SK-N-SH (cell line): ENCODE measurements at regions of chr9 and their contacts with region 1.

Region 1: GRCh38 chr9:34701769-34702736 is 7.9 kb downstream of the CCL21 start:
- DNase-seq: peak; percentile 90
- H3K4me3 ChIP-seq: peak overlapping the region; percentile 54 to 58
- H3K27ac ChIP-seq: peak overlapping the region in 1 of 2 experiments; percentile 18; a peak in 2 of 4 replicates
- H3K4me1 ChIP-seq: peaks cover 0 to 4% of the 10 kb centered on the region in 2 experiments; a peak in 1 of 4 replicates
- H3K27me3 ChIP-seq: no peaks in the 10 kb centered on the region
- CTCF ChIP-seq: peak; percentile 98
- EP300 ChIP-seq: 0 out of 4 replicates have a peak, but pooled peaks of 1 of the 2 experiments have one; percentile 24
- RAD21 ChIP-seq: peak; percentile 90

Region 2: DNA sequence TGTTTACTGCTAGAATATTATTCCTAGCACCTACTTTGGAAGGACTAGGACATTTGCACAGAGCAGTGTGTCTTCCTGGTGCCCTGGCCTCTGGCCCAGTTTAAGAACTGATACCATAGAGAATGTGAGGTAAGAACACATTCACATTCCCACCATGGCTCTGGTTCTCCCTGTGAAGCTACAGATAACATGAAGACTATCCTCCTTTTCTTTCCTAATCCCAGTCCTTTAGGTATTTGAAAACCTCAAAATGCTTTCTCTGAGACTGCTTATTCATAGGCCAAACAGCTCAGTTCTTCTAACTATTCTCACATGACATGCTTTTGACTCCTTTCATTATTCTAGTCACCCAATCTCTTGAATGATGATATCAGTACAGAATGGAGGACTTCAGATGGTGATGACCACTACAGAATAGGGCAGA is 255.6 kb before region 1 on chr9:
- CTCF ChIA-PET with region 1: no interaction called
- POLR2A ChIA-PET with region 1: no interaction called
- DNase-seq: no peak
- H3K4me3 ChIP-seq: no peak overlapping the region
- H3K27ac ChIP-seq: no peak overlapping the region
- H3K4me1 ChIP-seq: peaks cover 9 to 15% of the 10 kb centered on the region in 2 experiments; a peak in 2 of 4 replicates
- H3K27me3 ChIP-seq: no peaks in the 10 kb centered on the region
- CTCF ChIP-seq: no peak
- EP300 ChIP-seq: no peak
- RAD21 ChIP-seq: no peak

Region 3: DNA sequence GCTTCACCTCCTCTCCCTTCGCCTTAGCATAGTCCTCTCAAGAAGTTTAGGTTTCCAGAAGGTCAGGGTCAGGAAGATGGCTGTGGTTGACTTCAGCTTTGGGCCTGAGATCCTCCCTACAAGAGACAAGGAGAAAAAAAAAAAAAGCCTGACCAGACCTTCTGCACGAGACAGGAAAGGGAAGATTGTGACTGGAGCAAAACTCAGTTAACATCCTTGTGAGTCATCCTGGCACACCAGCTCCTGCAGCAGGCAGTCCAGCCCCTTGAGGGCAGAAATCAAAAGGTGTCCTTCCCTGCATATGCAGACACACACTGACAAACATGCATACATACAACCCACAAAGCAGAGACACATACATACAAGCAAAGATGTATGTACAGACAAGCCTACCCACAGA is 161.2 kb before region 1 on chr9:
- CTCF ChIA-PET with region 1: no interaction called
- POLR2A ChIA-PET with region 1: no interaction called
- DNase-seq: peak; percentile 10
- H3K4me3 ChIP-seq: no peak overlapping the region
- H3K27ac ChIP-seq: no peak overlapping the region; a peak in 1 of 4 replicates
- H3K4me1 ChIP-seq: peaks cover 0 to 6% of the 10 kb centered on the region in 2 experiments; a peak in 1 of 4 replicates
- H3K27me3 ChIP-seq: peaks cover 6% of the 10 kb centered on the region; the same call in 1 of the 2 replicates
- CTCF ChIP-seq: no peak
- EP300 ChIP-seq: no peak
- RAD21 ChIP-seq: no peak

Region 4: GRCh38 chr9:34611829-34612630 is 90.0 kb before region 1 on chr9 and contains the start of gene RPP25L:
- CTCF ChIA-PET with region 1: interaction called, 28 read pairs
- POLR2A ChIA-PET with region 1: no interaction called
- DNase-seq: peak; percentile 93
- H3K4me3 ChIP-seq: peak within 1 kb of the TSS; percentile 66 to 84
- H3K27ac ChIP-seq: peak within 1 kb of the TSS; percentile 73 to 75
- H3K4me1 ChIP-seq: peaks cover 0 to 36% of the 10 kb centered on the region in 2 experiments; a peak in 1 of 4 replicates
- H3K27me3 ChIP-seq: no peaks in the 10 kb centered on the region
- CTCF ChIP-seq: no peak
- EP300 ChIP-seq: no peak
- RAD21 ChIP-seq: no peak
- polyA plus RNA-seq, gene RPP25L: 46.3 and 47.6 TPM in 2 replicates

Region 5: DNA sequence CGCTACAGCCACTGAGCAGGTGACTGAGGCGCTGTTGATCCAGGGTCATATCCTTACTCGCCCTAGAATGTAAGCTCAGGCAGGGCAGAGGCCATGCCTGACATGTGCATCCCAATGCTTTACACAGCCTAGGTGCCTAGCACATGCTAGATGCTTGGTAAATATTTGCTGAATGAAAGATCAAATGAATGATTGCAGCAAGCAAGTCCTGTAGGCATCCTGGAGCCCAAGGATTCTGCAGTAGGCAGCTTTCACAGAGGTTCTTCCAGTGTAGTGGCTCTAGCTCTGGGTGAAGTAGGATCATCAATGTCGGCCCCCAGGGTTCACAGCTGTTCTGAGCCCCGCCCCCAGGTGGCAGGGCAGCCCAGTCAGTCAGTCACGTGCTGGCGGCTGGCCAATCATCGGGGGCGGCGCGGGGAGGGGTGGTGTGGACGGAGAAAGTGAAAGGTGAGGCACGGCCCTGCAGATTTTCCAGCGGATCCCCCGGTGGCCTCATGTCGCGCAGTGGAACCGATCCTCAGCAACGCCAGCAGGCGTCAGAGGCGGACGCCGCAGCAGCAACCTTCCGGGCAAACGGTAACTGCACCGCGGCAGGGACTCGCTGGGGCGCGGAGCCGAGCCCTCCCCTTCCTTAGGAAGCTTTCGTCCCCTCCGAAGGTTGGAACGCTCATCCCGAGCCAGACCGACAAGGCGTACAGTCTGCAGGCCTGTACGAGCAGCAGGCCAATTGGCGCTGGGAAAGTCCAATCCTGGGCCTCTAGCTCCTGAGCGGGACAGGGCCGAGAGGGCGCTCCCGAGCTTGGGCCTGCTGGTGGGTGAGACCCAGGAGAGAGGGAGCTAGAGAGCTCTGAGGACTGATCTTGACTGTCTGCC is 55.6 kb before region 1 on chr9 and contains the start of gene GALT:
- CTCF ChIA-PET with region 1: interaction called, 29 read pairs
- POLR2A ChIA-PET with region 1: interaction called, 3 read pairs
- DNase-seq: peak; percentile 97
- H3K4me3 ChIP-seq: peak within 1 kb of the TSS; percentile 77 to 84
- H3K27ac ChIP-seq: peak within 1 kb of the TSS; percentile 66 to 95
- H3K4me1 ChIP-seq: peaks cover 3 to 47% of the 10 kb centered on the region in 2 experiments; a peak in 2 of 4 replicates
- H3K27me3 ChIP-seq: no peaks in the 10 kb centered on the region
- CTCF ChIP-seq: peak; percentile 55
- EP300 ChIP-seq: no peak; a peak in 1 of 4 replicates
- RAD21 ChIP-seq: peak; percentile 42
- polyA plus RNA-seq, gene GALT: 45.9 and 49.1 TPM in 2 replicates

Region 6: GRCh38 chr9:34675048-34675714 is 26.9 kb before region 1 on chr9:
- CTCF ChIA-PET with region 1: interaction called, 57 read pairs
- POLR2A ChIA-PET with region 1: no interaction called
- DNase-seq: peak; percentile 84
- H3K4me3 ChIP-seq: peak overlapping the region in 1 of 2 experiments; percentile 11; a peak in 1 of 4 replicates
- H3K27ac ChIP-seq: no peak overlapping the region
- H3K4me1 ChIP-seq: no peaks in the 10 kb centered on the region
- H3K27me3 ChIP-seq: no peaks in the 10 kb centered on the region
- CTCF ChIP-seq: peak; percentile 70
- EP300 ChIP-seq: no peak
- RAD21 ChIP-seq: peak; percentile 83

Region 7: DNA sequence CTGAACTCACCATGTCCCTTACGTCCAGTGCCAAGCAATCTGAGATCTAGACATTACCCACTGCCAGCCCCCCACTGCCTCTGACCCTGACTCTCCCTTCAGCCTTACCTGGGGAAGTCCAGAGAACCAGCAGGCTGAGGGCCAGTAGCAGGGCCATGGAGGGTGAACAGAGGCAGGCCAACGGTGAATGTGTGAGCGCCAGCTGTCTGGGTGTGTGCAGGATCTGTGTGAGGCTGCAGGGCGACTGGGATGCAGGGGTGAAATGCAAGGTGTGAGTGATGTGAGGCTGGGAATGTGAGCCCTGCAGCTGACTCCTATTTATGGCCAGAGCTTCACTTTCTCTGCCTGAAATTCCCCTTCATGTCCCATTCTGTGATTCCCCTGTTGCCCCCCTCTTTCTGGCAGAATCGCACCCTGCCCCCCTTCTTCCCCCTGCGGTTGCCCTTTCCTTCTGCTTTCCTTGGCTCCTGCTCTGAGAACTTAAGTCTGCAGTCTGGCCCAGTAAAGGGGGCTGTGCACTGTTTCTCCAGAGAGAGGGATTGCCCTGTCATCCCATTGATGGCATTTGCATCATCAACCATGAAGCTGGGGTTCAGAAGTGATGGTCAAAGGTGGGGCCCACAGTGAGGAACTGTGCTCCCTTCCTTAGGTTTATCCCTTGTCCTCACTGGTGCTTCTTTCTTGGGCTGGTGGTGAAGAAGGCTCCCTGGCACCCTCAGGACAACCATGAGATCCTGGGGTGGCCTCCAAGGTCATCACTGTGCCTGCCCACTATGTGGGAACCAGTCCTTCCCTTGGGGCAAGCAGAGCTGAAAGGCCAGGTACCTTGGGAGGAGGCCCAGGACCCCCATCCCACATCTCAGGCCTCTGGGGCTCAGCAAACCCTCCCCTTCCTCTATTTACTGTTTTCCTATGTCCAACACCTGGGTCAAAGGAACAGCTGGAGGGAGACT is 10.8 kb before region 1 on chr9 and contains the start of gene CCL19:
- CTCF ChIA-PET with region 1: interaction called, 43 read pairs
- POLR2A ChIA-PET with region 1: interaction called, 3 read pairs
- DNase-seq: no peak
- H3K4me3 ChIP-seq: no peak within 1 kb of the TSS
- H3K27ac ChIP-seq: no peak within 1 kb of the TSS
- H3K4me1 ChIP-seq: no peaks in the 10 kb centered on the region; a peak in 1 of 4 replicates
- H3K27me3 ChIP-seq: no peaks in the 10 kb centered on the region
- CTCF ChIP-seq: no peak
- EP300 ChIP-seq: no peak
- RAD21 ChIP-seq: no peak
- polyA plus RNA-seq, gene CCL19: not detected in 2 replicates

Region 8: GRCh38 chr9:34723141-34723540 is 21.1 kb after region 1 on chr9:
- CTCF ChIA-PET with region 1: interaction called, 10 read pairs
- POLR2A ChIA-PET with region 1: no interaction called
- DNase-seq: no peak
- H3K4me3 ChIP-seq: no peak overlapping the region
- H3K27ac ChIP-seq: no peak overlapping the region
- H3K4me1 ChIP-seq: peaks cover 0 to 3% of the 10 kb centered on the region in 2 experiments; a peak in 1 of 4 replicates
- H3K27me3 ChIP-seq: no peaks in the 10 kb centered on the region
- CTCF ChIP-seq: no peak
- EP300 ChIP-seq: no peak
- RAD21 ChIP-seq: no peak

Region 9: DNA sequence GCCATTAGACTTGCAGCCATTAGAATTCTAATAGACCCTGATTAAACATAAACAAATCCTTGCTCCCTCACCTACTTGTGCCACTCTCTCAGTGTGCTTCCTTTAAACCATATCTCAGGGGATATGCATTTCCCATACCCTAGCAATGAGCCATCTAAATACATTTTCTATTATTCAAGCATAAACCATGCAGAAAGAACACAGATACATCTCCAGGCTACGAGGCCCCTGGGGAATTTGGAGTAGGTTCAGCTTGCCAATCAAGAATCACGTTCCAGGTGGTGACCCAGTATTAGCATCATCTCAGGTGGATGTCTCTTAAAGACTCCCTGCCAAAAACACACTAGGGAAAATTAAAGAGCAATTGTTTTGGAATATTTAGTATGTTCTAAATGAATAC is 100.9 kb after region 1 on chr9:
- CTCF ChIA-PET with region 1: no interaction called
- POLR2A ChIA-PET with region 1: no interaction called
- DNase-seq: no peak
- H3K4me3 ChIP-seq: no peak overlapping the region
- H3K27ac ChIP-seq: no peak overlapping the region
- H3K4me1 ChIP-seq: no peaks in the 10 kb centered on the region
- H3K27me3 ChIP-seq: no peaks in the 10 kb centered on the region
- CTCF ChIP-seq: no peak
- EP300 ChIP-seq: no peak
- RAD21 ChIP-seq: no peak